ENCODE measurements at regions of chr7 and their contacts with region 1.

Region 1: GRCh38 chr7:125383324-125383723 is 453.7 kb upstream of the POT1 start:
- DNase-seq: no peak
- ATAC-seq: no peak
- H3K4me3 Mint-ChIP-seq: no peak overlapping the region
- H3K27ac Mint-ChIP-seq: no peak overlapping the region
- H3K4me1 Mint-ChIP-seq: no peaks in the 10 kb centered on the region
- H3K27me3 Mint-ChIP-seq: no peaks in the 10 kb centered on the region
- CTCF ChIP-seq: no peak

Region 2: GRCh38 chr7:125326666-125327255 is 56.6 kb before region 1 on chr7:
- CTCF ChIA-PET with region 1: no interaction called
- POLR2A ChIA-PET with region 1: no interaction called
- intact Hi-C with region 1: loop called (anchors 10 kb)
- DNase-seq: no peak
- ATAC-seq: no peak
- H3K4me3 Mint-ChIP-seq: no peak overlapping the region
- H3K27ac Mint-ChIP-seq: no peak overlapping the region
- H3K4me1 Mint-ChIP-seq: no peaks in the 10 kb centered on the region
- H3K27me3 Mint-ChIP-seq: no peaks in the 10 kb centered on the region
- CTCF ChIP-seq: no peak

Measured in activated B cell treated with CpG ODN at 0.5 μM for 24 hours (primary cell).